HepG2 (cell line): ENCODE measurements at regions of chr3 and their contacts with region 1.

Region 1: DNA sequence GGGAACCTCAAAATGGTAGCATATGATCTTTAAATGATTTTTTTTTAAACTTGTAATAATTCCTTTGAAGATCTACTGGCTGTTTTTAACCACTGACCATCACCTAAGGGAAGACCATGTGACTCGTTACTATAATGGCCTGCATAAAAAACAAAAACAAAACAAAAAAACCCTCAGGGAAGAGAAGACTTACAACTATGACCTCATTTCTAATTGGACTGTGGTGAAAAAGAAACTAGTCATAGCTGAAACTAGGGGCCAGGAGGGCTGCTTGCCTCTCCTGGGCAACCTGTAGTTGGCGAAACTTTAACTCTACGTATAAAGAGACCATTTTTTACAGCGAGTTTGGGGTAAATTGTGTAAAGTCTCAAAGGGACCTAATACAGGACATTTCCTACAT is 23.0 kb downstream of the PAQR9 start:
- DNase-seq: peak; percentile 19
- ATAC-seq: peak; percentile 64
- H3K4me3 ChIP-seq: peak overlapping the region in 1 of 3 experiments; percentile 53; a peak in 1 of 6 replicates
- H3K27ac ChIP-seq: peak overlapping the region; percentile 89
- H3K4me1 ChIP-seq: peaks cover 72% of the 10 kb centered on the region
- H3K27me3 ChIP-seq: peaks cover 0 to 6% of the 10 kb centered on the region in 2 experiments; a peak in 1 of 5 replicates
- CTCF ChIP-seq: no peak
- EP300 ChIP-seq: no peak
- POLR2A ChIP-seq: no peak
- RAD21 ChIP-seq: no peak

Region 2: GRCh38 chr3:142929109-142929508 is 11.4 kb before region 1 on chr3:
- CTCF ChIA-PET with region 1: no interaction called
- POLR2A ChIA-PET with region 1: interaction called, 31 read pairs
- in situ Hi-C with region 1: no loop called
- intact Hi-C with region 1: no loop called
- DNase-seq: peak; percentile 55
- ATAC-seq: peak; percentile 69
- H3K4me3 ChIP-seq: no peak overlapping the region
- H3K27ac ChIP-seq: no peak overlapping the region
- H3K4me1 ChIP-seq: peaks cover 68% of the 10 kb centered on the region
- H3K27me3 ChIP-seq: peaks cover 0 to 12% of the 10 kb centered on the region in 2 experiments; a peak in 3 of 5 replicates
- CTCF ChIP-seq: peak; percentile 78
- EP300 ChIP-seq: no peak
- POLR2A ChIP-seq: no peak
- RAD21 ChIP-seq: peak; percentile 66

Region 3: GRCh38 chr3:142952272-142953193 is 12.1 kb after region 1 on chr3:
- CTCF ChIA-PET with region 1: no interaction called
- POLR2A ChIA-PET with region 1: interaction called, 27 read pairs
- in situ Hi-C with region 1: no loop called
- intact Hi-C with region 1: no loop called
- DNase-seq: no peak
- ATAC-seq: peak; percentile 73
- H3K4me3 ChIP-seq: no peak overlapping the region
- H3K27ac ChIP-seq: peak overlapping the region; percentile 28
- H3K4me1 ChIP-seq: peaks cover 43% of the 10 kb centered on the region
- H3K27me3 ChIP-seq: no peaks in the 10 kb centered on the region; a peak in 1 of 5 replicates
- CTCF ChIP-seq: no peak
- EP300 ChIP-seq: peak in 1 of 2 experiments; percentile 24; a peak in 1 of 4 replicates
- POLR2A ChIP-seq: no peak
- RAD21 ChIP-seq: no peak

Region 4: GRCh38 chr3:142962520-142963233 is 22.2 kb after region 1 on chr3:
- CTCF ChIA-PET with region 1: interaction called, 4 read pairs
- POLR2A ChIA-PET with region 1: interaction called, 34 read pairs
- in situ Hi-C with region 1: no loop called
- intact Hi-C with region 1: no loop called
- DNase-seq: no peak
- ATAC-seq: peak; percentile 18
- H3K4me3 ChIP-seq: peak overlapping the region in 2 of 3 experiments; percentile 66 to 72; a peak in 4 of 6 replicates
- H3K27ac ChIP-seq: peak overlapping the region; percentile 68
- H3K4me1 ChIP-seq: peaks cover 66% of the 10 kb centered on the region
- H3K27me3 ChIP-seq: peaks cover 0 to 10% of the 10 kb centered on the region in 2 experiments; a peak in 1 of 5 replicates
- CTCF ChIP-seq: no peak
- EP300 ChIP-seq: no peak
- POLR2A ChIP-seq: no peak
- RAD21 ChIP-seq: no peak

Region 5: DNA sequence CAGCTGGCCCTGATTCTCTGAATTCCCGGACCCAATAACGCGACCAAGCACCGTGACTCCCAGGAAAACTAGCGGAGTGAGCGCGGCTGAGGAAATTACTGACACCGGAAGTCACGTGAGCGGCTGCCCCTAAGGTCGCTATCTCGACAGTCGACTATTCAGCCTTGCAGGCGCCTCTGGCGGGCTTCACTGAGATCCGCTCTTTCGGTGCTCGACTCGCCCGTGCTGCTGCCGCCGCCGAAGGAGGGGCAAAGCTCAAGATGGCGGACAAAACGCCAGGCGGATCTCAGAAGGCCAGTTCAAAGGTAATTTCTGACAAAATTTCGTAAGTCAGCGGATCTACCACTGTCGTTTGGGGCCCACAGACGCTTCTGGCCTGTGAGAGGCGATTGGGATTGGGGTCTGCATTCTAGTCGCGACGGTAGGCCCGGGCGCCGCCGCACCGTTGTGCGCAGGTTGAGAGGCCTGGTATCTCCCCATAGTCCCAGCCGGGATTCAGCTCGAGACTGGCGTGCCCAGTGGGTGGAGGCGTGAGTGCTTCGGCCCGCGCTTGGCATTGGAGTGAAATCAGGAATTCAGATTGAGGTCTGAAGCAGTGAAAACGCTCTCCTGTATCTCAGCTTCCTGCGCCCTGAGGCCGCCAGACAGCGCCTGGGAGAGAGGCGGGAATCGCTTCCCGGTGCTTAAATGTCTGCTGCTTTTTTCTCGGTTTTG is 61.0 kb after region 1 on chr3 and contains the start of gene U2SURP:
- CTCF ChIA-PET with region 1: no interaction called
- POLR2A ChIA-PET with region 1: interaction called, 10 read pairs
- in situ Hi-C with region 1: no loop called
- intact Hi-C with region 1: no loop called
- DNase-seq: peak; percentile 96
- ATAC-seq: peak; percentile 85
- H3K4me3 ChIP-seq: peak within 1 kb of the TSS; percentile 87 to 92 (median 90)
- H3K27ac ChIP-seq: peak within 1 kb of the TSS; percentile 89
- H3K4me1 ChIP-seq: peaks cover 60% of the 10 kb centered on the region
- H3K27me3 ChIP-seq: no peaks in the 10 kb centered on the region; a peak in 1 of 5 replicates
- CTCF ChIP-seq: no peak
- EP300 ChIP-seq: peak; percentile 64 to 80; a peak in 3 of 4 replicates
- POLR2A ChIP-seq: peak; percentile 95
- RAD21 ChIP-seq: 0 out of 2 replicates have a peak, but pooled peaks have one; percentile 40
- total RNA-seq, gene U2SURP: 173 and 250 TPM in 2 replicates